ENCODE measurements at regions of chr14 and their contacts with region 1.

Region 1: GRCh38 chr14:68816262-68816942 is 23.5 kb upstream of the ZFP36L1 start:
- DNase-seq: peak; percentile 89
- H3K4me3 ChIP-seq: peak overlapping the region in 1 of 3 experiments; percentile 24
- H3K27ac ChIP-seq: peak overlapping the region; percentile 71
- H3K4me1 ChIP-seq: peaks cover 21% of the 10 kb centered on the region
- H3K27me3 ChIP-seq: no peaks in the 10 kb centered on the region
- CTCF ChIP-seq: peak; percentile 95
- POLR2A ChIP-seq: peak; percentile 46

Region 2: DNA sequence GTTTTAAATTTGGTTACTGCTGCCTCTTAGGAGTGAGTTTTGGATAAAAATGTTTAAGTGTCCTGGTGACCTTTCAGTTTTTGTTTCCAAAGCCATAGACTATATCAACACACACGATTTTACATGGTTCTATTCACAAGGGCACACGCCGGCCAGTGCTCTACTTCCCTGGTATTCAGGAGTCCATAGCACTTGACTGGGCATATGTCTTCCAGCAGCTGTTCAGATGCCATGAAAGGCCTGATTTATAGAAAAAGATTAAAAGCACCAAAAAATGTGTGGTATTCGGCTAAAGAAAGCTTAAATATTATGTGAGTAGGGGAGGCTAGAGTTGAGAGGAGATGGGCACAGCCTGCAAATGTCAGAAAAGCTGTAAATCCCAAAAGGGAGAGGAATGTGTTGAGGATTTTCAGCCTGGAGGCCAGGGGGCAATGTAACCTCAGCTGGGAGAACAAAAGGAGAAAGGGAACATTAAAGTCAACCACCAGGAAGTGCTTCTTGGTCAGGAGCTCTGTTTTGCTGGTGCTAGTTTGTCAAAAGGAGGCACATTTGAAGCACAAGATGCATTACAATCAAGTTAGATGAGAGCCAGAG is 518.4 kb before region 1 on chr14:
- CTCF ChIA-PET with region 1: interaction called, 21 read pairs
- POLR2A ChIA-PET with region 1: no interaction called
- dilution Hi-C with region 1: no loop called
- intact Hi-C with region 1: loop called (anchors 1 kb)
- DNase-seq: peak; percentile 58
- H3K4me3 ChIP-seq: no peak overlapping the region
- H3K27ac ChIP-seq: no peak overlapping the region
- H3K4me1 ChIP-seq: peaks cover 10% of the 10 kb centered on the region
- H3K27me3 ChIP-seq: no peaks in the 10 kb centered on the region
- CTCF ChIP-seq: peak; percentile 18 to 43
- POLR2A ChIP-seq: no peak

Measured in endothelial cell of umbilical vein (primary cell).